Esophagus muscularis mucosa (tissue), 4 donors: ENCODE measurements at regions of chr18 and their contacts with region 1.

Region 1: DNA sequence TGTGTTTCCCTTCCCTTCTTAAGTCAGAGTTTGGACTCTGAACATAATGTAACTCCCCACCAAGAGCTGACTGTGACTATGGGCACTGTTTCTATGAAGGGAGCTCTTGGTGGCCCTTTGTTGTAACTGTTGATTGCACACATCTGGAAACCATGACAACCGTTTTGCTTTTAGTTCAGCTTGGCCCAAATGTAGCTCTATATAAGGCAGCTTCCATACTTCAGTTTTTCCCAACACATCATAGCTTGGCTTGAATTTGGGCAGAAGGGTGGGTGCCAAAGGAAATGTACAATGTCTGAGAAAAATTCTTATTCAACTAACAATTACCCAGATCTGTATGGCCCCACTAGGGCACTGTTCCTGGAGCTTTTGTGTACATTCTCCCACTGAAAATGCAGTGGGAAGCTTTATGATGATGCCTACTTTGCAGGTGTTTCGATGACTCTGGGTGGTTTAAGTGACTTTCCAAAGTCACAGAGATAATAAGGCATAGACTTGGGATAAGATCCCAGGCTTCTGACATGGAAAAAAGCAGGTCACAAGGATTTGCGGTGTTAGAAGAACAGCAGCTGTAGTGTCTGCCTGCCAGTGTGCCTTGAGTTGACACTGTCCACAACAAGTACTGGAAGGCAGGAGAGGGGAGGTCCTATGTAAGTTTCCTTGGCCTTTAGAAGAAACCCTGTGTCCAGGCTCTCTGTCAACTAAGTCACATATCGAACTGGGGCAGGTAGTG is 2.4 kb upstream of the CETN1 start:
- DNase-seq: no peak
- H3K4me3 ChIP-seq: no peak overlapping the region
- H3K27ac ChIP-seq: no peak overlapping the region
- H3K4me1 ChIP-seq: peaks cover 0 to 37% (median 30%) of the 10 kb centered on the region in 4 donors
- H3K27me3 ChIP-seq: no peaks in the 10 kb centered on the region
- CTCF ChIP-seq: no peak
- EP300 ChIP-seq: no peak
- POLR2A ChIP-seq: no peak

Region 2: DNA sequence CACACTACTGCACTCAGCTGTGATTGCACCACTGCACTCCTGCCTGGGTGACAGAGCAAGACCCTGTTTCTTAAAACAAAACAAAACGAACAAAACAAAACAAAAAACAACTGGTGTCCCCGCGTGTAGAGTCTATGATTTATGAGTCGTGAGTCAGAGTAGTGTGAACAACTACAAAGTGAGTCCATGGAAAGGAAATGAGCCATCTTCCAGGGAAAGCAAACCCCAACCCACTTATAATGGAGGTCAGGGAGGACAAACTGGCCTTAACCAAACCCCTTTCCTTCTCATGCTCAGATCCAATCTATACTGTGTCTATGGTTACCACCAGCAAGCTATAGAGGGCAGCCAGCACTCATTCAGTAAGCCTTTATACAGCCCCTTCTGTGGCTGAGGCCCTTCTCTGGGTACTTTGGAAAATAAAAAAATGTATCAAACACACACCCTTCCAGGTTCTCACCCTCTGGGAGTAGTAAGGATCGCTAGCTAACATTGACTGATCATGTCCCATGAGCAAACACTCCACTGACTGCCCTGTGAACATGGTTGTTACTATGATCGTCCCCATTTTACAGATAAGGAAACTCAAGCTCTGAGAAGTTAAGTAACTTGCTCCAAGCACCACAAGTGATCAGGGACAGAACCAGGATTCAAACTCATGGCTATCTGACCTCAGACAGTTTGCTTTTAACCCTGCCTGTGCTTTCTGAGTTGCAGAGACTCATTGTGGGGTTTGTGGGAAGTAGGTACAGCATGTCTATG is 52.6 kb before region 1 on chr18:
- intact Hi-C with region 1: loop called (anchors 10 kb)
- DNase-seq: no peak
- H3K4me3 ChIP-seq: no peak overlapping the region
- H3K27ac ChIP-seq: no peak overlapping the region
- H3K4me1 ChIP-seq: peaks cover 0 to 16% (median 13%) of the 10 kb centered on the region in 4 donors
- H3K27me3 ChIP-seq: no peaks in the 10 kb centered on the region
- CTCF ChIP-seq: no peak
- EP300 ChIP-seq: no peak
- POLR2A ChIP-seq: no peak